Caco-2 (cell line): ENCODE measurements at regions of chr12 and their contacts with region 1.

Region 1: DNA sequence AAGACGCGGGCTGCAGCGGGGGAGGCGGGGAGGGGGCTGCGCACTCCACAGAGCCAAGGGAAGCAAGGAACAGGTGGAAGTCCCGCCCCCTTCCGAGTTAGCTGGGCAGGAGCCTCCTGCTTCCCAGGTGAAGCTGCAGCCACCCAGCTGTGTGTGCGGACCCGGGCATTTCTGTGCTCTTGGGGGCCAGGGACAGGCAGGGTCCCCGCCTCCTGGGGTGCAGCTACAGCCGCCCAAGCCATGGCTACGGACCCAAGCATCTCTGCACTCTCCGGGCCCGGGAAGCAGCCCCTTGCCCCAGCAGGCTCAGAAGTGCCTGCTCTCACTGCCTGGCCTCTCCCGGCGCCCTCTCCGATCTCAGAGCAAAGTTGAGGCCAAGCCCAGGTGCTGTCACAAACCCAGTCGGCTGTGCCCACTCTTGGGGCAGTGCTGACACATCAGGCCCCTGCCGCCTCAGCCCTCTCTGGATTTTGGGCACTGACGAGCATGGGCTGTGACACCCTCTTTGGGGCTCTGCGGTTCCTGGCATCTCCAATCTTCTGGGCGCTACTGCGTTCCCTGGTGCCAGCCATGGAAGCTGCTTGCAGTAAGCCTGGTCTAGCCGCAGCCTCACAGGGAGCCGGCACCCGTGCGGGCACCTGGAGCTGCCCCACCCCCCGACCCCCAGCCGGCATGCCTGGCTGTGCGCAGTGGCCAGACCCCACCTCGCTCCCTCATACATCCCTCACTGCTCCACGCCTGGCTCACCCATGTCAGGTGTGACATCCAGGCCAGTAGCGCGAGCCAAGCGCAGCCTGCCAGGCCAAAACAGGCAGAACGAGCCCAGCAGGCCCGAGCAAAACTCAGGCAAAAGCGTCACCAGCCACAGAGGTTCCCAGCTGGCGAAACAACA is 8.5 kb upstream of the MGAT4C start:
- DNase-seq: peak; percentile 27 to 39
- H3K4me3 ChIP-seq: peak overlapping the region; percentile 36
- H3K4me3 Mint-ChIP-seq: peak overlapping the region; percentile 71
- H3K27ac Mint-ChIP-seq: no peak overlapping the region
- H3K4me1 ChIP-seq: no peaks in the 10 kb centered on the region
- H3K4me1 Mint-ChIP-seq: peaks cover 6% of the 10 kb centered on the region
- H3K27me3 ChIP-seq: no peaks in the 10 kb centered on the region
- H3K27me3 Mint-ChIP-seq: peaks cover 19% of the 10 kb centered on the region
- CTCF ChIP-seq: no peak

Region 2: DNA sequence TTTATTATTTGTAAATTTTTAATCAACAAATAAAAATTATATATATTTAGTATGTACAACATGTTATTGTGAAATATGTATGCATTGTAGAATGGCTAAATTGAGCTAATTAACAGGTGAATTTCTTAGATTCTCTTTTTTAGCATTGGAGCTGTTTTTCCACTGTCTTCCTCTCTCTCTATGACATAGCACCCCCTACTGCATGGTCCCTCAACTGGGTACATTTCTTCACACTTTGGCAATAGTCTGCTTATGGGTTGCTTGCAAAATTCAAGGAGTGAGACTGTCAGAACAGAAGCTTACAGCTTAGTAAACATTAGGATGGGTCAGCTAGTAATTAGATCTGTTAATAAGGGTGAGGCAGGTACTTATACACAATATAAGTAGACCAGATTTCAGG is 650.0 kb after region 1 on chr12:
- CTCF ChIA-PET with region 1: no interaction called
- POLR2A ChIA-PET with region 1: no interaction called
- intact Hi-C with region 1: loop called (anchors 5 kb)
- DNase-seq: peak in 1 of 2 experiments; percentile 39
- H3K4me3 ChIP-seq: no peak overlapping the region
- H3K4me3 Mint-ChIP-seq: no peak overlapping the region
- H3K27ac Mint-ChIP-seq: no peak overlapping the region
- H3K4me1 ChIP-seq: no peaks in the 10 kb centered on the region
- H3K4me1 Mint-ChIP-seq: no peaks in the 10 kb centered on the region
- H3K27me3 ChIP-seq: no peaks in the 10 kb centered on the region
- H3K27me3 Mint-ChIP-seq: no peaks in the 10 kb centered on the region
- CTCF ChIP-seq: peak in 1 of 2 experiments; percentile 39